ENCODE measurements at regions of chr7 and their contacts with region 1.

Region 1: GRCh38 chr7:128425850-128426249 is 16.1 kb upstream of the IMPDH1 start:
- DNase-seq: peak in 1 of 2 donors; percentile 86
- ATAC-seq: peak; percentile 79

Region 2: GRCh38 chr7:128455551-128456254 is 29.9 kb after region 1 on chr7 and contains the start of gene HILPDA:
- intact Hi-C with region 1: loop called (anchors 2 to 5 kb)
- DNase-seq: peak; percentile 92 to 96
- ATAC-seq: peak; percentile 96
- total RNA-seq, gene HILPDA: 5.8 to 7.3 TPM

Measured in left colon (tissue), 2 donors.